ENCODE measurements at regions of chr1 and their contacts with region 1.

Region 1: DNA sequence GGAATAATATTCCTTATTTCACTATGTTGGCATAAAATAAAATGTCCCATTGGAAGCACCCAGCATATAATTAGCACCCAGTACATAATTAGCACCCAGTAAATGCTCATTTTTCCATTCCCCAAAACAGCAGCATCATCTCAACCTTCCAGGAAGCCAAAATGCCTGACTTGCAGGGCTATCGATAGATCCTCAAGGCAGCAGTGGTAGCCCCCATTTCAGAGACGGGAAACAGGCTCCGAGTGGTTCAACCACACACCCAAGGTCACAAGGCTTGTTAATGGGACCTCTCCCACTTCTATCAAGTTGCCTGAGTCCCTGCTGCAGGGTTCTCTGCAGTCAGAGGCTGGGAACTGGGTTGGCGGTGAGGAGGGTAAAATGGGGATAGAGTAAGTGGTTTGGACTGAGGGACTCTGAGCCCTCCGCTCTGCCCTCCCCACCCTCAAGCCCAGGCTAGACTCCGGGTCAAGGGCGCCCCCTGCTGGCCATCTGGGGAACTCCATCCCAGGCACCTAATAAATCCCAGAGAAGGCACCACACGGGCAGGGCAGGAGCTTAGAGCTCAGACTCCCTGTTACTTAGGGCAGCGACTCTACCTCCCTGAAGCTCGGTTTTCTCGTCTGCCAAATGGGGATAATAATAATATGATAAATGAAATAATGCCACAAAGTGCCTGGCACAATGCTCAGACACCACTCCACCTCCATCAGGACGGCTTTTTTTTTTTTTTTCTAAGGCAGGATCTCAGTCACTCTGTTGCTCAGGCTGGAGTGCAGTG is 21.9 kb upstream of the LAPTM5 start:
- DNase-seq: peak; percentile 97
- ATAC-seq: peak; percentile 82
- H3K4me3 Mint-ChIP-seq: no peak overlapping the region
- H3K27ac Mint-ChIP-seq: no peak overlapping the region
- H3K4me1 Mint-ChIP-seq: peaks cover 10% of the 10 kb centered on the region
- H3K27me3 Mint-ChIP-seq: peaks cover 7% of the 10 kb centered on the region; the same call in 1 of the 2 replicates
- CTCF ChIP-seq: peak; percentile 100

Region 2: GRCh38 chr1:30611741-30612309 is 167.7 kb before region 1 on chr1:
- CTCF ChIA-PET with region 1: no interaction called
- POLR2A ChIA-PET with region 1: no interaction called
- DNase-seq: peak; percentile 26
- ATAC-seq: no peak
- H3K4me3 Mint-ChIP-seq: no peak overlapping the region
- H3K27ac Mint-ChIP-seq: no peak overlapping the region
- H3K4me1 Mint-ChIP-seq: no peaks in the 10 kb centered on the region
- H3K27me3 Mint-ChIP-seq: no peaks in the 10 kb centered on the region
- CTCF ChIP-seq: no peak

Region 3: GRCh38 chr1:30724175-30724574 is 55.3 kb before region 1 on chr1:
- CTCF ChIA-PET with region 1: interaction called, 290 read pairs
- POLR2A ChIA-PET with region 1: interaction called, 6 read pairs
- DNase-seq: no peak
- ATAC-seq: no peak
- H3K4me3 Mint-ChIP-seq: no peak overlapping the region
- H3K27ac Mint-ChIP-seq: peak overlapping the region; percentile 79
- H3K4me1 Mint-ChIP-seq: peaks cover 20% of the 10 kb centered on the region
- H3K27me3 Mint-ChIP-seq: no peaks in the 10 kb centered on the region
- CTCF ChIP-seq: no peak

Region 4: DNA sequence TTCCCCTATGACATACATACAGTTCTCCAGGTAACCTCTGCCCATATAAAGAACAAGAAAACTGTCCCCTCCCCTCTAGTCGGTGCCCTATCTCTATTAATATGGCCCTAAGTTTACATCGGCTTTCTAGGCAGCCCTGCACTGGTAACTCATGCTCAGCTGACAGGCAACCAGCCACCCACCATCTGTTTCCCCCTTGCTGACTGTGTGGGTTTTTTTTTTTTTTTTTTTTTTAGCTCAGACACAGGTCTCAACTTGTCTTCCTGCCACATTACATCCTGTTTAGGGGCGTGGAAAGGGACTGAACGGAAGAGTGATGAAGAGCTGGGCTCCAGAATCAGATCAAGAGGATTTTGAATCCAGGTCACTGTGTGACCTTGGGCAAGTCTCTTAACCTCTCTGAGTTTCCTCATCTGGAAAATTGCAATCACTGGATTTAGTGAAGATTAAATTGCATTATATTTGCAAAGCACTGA is 35.9 kb before region 1 on chr1:
- CTCF ChIA-PET with region 1: interaction called, 40 read pairs
- POLR2A ChIA-PET with region 1: no interaction called
- DNase-seq: no peak
- ATAC-seq: no peak
- H3K4me3 Mint-ChIP-seq: no peak overlapping the region
- H3K27ac Mint-ChIP-seq: no peak overlapping the region
- H3K4me1 Mint-ChIP-seq: peaks cover 33% of the 10 kb centered on the region
- H3K27me3 Mint-ChIP-seq: no peaks in the 10 kb centered on the region
- CTCF ChIP-seq: no peak

Region 5: DNA sequence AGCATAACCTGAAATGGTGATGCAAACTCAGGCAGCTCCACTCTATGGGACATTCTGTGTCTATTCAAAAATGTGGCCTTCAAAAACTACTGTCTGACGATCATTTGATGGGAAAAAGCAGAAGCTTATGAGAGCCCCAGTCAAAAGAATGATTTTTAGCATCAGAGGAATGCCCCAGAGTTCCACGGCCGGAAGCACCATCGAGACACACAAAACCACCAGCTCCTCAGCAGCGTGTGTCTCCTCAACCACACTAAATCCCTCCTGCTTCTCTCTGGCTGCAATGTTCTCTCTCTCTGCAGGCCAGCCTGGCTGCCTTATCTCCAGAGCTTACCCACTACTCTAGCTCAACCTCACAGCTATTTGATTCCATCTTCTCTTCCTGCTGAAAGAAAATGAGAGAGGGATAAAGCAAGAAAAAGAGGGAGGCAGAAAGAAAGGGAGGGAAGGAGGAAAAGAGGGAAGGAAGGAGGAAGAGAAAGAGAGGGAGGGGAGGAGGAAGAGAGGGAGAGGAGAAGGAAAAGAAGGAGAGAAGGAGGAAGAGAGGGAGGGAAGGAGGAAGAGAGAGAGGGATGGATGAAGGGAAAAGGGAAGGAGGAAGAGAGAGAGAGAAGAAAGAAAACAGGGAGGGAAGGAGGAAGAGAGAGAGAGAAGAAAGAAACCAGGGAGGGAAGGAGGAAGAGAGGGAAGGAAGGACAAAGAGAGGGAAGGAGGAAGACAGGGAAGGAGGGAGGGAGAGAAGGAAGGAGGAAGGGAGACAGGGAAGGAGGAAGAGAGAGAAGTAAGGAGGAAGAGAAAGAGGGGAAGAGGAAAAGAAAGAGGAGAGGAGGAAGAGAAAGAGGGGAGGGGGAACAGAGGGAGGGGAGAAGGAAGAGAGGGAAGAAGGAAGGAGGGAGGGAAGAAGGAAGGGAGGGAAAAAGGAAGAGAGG is 11.6 kb after region 1 on chr1:
- CTCF ChIA-PET with region 1: interaction called, 12 read pairs
- POLR2A ChIA-PET with region 1: no interaction called
- DNase-seq: no peak
- ATAC-seq: no peak
- H3K4me3 Mint-ChIP-seq: no peak overlapping the region
- H3K27ac Mint-ChIP-seq: no peak overlapping the region
- H3K4me1 Mint-ChIP-seq: peaks cover 4% of the 10 kb centered on the region
- H3K27me3 Mint-ChIP-seq: no peaks in the 10 kb centered on the region; the same call in 1 of the 2 replicates
- CTCF ChIP-seq: no peak

Region 6: GRCh38 chr1:30929135-30929889 is 149.8 kb after region 1 on chr1:
- CTCF ChIA-PET with region 1: interaction called, 29 read pairs
- POLR2A ChIA-PET with region 1: no interaction called
- DNase-seq: peak; percentile 65
- ATAC-seq: peak; percentile 71
- H3K4me3 Mint-ChIP-seq: no peak overlapping the region
- H3K27ac Mint-ChIP-seq: 0 out of 2 replicates have a peak overlapping the region, but pooled peaks have one; percentile 58
- H3K4me1 Mint-ChIP-seq: peaks cover 5% of the 10 kb centered on the region
- H3K27me3 Mint-ChIP-seq: no peaks in the 10 kb centered on the region
- CTCF ChIP-seq: peak; percentile 87; the same call in 1 of the 2 replicates